Activated T-helper 1 cell treated with anti-CD3 and anti-CD28 coated beads, Interleukin-12 subunit alpha, Interleukin-12 subunit beta, Interleukin-2, Interleukin-4 antibody, amounts not matched to agents 30 ng/mL and 10 ng/mL and 1 ng/mL, durations not matched to agents 14 hours and 24 hours and 36 hours (primary cell): ENCODE measurements at regions of chr20 and their contacts with region 1.

Region 1: GRCh38 chr20:48787861-48788375 is 39.9 kb downstream of the PREX1 start:
- DNase-seq: no peak
- H3K4me3 Mint-ChIP-seq: no peak overlapping the region
- H3K27ac Mint-ChIP-seq: peak overlapping the region; percentile 27
- H3K4me1 Mint-ChIP-seq: peaks cover 60% of the 10 kb centered on the region
- H3K27me3 Mint-ChIP-seq: no peaks in the 10 kb centered on the region

Region 2: GRCh38 chr20:48657475-48658470 is 130.1 kb before region 1 on chr20:
- intact Hi-C with region 1: loop called (anchors 5 kb)
- DNase-seq: peak; percentile 50
- H3K4me3 Mint-ChIP-seq: no peak overlapping the region
- H3K27ac Mint-ChIP-seq: peak overlapping the region; percentile 24
- H3K4me1 Mint-ChIP-seq: peaks cover 10% of the 10 kb centered on the region
- H3K27me3 Mint-ChIP-seq: no peaks in the 10 kb centered on the region

Region 3: DNA sequence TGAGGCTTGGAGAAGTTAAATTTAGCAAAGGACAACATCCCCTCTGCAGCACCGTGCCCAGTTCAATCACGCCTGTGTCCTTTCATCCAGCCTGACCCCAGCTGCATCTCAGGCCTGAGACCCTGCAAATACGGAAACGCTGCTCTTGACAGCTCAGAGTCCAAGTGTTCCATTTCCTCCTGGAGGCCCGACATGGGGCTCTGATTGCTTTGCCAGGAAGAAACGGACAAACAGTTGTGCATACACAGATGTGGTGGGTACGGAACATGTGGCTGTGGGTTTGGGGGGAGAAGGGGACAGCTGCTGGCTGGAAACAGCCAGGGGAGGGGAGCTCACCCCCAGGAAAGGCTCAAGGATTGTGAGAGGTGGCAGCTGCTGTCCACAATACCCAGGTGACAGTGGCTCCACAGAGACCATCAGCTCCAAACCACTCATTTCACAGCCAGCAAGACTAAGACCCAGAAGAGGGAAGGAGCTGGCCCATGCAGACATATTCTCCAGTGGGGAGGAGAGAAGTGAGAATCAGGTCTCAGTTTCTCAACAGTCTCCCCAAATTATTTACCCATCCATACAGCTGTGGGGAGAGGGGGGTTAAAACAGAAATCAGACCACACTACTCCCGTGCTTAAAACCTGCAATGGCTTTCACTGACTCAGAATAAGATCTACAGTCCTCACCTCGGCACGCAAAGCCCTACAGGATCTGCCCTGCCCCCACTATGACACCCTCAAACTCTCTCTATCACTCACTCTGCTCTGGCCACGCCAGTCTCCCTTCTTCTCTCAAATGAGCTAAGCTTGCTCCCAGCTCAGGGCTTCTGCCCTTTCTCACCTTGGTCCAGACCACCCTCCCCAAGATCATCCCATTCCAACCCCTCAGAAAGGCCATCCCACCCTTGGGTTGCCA is 49.3 kb before region 1 on chr20:
- intact Hi-C with region 1: loop called (anchors 1 kb)
- DNase-seq: peak; percentile 69
- H3K4me3 Mint-ChIP-seq: peak overlapping the region; percentile 54
- H3K27ac Mint-ChIP-seq: peak overlapping the region; percentile 95
- H3K4me1 Mint-ChIP-seq: peaks cover 68% of the 10 kb centered on the region
- H3K27me3 Mint-ChIP-seq: no peaks in the 10 kb centered on the region

Region 4: GRCh38 chr20:48769069-48769879 is 18.6 kb before region 1 on chr20:
- intact Hi-C with region 1: loop called (anchors 1 kb)
- DNase-seq: peak; percentile 86
- H3K4me3 Mint-ChIP-seq: peak overlapping the region; percentile 66
- H3K27ac Mint-ChIP-seq: peak overlapping the region; percentile 89
- H3K4me1 Mint-ChIP-seq: peaks cover 87% of the 10 kb centered on the region
- H3K27me3 Mint-ChIP-seq: no peaks in the 10 kb centered on the region

Region 5: DNA sequence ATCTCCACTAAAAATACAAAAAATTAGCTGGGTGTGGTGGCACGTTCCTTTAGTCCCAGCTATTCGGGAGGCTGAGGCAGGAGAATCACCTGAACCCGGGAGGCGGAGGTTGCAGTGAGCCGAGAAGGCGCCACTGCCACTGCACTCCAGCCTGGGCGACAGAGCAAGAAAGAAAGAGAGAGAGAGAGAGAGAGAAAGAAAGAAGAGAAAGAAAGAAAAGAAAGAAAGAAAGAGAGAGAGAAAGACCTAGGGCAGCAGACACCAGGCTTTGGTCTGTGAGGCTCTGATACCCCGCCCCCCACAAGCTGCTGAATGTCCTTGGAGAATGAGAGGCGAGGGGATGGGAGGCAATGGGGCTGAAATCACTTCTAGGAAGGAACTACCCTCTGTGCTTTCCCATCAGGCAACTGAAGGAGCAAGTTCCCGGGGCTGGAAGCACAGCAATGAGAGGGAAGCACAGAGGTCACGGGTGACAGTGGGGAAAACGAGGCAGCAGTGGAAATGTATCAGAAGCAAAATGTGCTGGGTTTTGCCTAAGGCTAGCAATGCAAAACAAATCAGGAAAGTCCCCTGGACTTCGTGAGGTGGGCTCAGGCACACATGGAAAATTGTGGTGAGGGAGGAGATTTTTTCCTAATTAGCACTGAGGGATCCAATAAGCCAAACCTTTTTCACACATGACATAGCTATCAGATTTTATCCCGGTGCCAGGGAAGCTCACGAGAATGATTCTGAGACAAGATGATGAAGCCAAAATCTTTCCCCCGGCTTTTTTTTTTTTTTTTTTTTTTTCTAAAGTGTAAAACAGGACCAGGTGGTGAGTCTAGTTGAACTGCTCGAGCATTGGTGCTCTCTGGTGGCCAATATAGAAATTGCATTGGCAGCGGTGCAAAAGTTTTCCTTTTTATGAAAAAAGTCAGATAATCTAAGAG is 116.7 kb after region 1 on chr20:
- intact Hi-C with region 1: loop called (anchors 2 kb)
- DNase-seq: peak; percentile 50
- H3K4me3 Mint-ChIP-seq: no peak overlapping the region
- H3K27ac Mint-ChIP-seq: no peak overlapping the region
- H3K4me1 Mint-ChIP-seq: peaks cover 16% of the 10 kb centered on the region
- H3K27me3 Mint-ChIP-seq: peaks cover 7% of the 10 kb centered on the region